ENCODE measurements at regions of chr5 and their contacts with region 1.

Region 1: DNA sequence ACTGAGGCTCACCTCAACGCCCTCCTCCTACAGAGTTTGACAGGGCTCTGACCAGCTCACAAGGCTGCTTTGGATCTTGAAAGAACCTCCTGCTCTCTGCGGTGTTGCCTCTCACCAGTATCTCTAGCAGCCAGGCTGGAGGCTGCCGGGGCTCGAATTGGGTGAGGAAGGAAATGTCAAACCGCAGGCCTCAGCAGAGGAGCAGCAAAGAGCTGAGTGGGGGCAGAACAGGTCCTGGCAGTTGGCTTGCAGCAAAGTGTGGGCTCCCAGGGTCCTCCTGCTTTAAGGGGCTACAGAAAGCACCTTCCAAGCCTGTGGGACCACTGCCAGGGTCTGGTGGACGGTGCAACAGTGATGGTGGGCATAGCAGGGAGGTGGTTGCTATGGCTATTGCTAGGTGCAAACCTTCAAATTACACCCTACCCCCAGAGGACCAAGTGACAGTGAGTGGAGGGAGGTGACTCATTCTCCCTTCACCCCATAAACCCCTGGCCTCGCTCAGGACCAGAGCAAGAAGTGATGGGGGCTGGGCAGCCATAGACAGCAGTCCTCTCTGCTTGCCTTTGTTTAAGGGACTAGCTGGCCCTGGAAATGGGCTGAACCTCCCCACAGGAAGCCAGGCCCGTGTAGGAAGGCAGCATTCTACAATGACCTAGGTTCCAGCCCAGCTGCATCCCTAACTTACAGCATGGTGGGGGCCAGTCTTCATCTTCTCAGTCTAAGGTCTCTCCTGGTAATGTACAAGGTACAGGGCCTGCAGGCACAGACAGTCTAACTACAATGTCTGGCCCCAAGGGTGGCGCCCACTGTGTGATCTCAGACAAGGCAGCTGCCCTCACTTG is 18.7 kb downstream of the LCP2 start:
- DNase-seq: peak; percentile 73
- ATAC-seq: peak; percentile 87
- H3K4me3 ChIP-seq: peak overlapping the region in 2 of 5 experiments; percentile 5 to 35
- H3K4me3 Mint-ChIP-seq: peak overlapping the region; percentile 61
- H3K27ac ChIP-seq: peak overlapping the region; percentile 15 to 49
- H3K27ac Mint-ChIP-seq: peak overlapping the region; percentile 90
- H3K4me1 ChIP-seq: peaks cover 41 to 46% of the 10 kb centered on the region in 2 donors
- H3K4me1 Mint-ChIP-seq: peaks cover 46% of the 10 kb centered on the region
- H3K27me3 ChIP-seq: no peaks in the 10 kb centered on the region
- H3K27me3 Mint-ChIP-seq: no peaks in the 10 kb centered on the region
- CTCF ChIP-seq: no peak

Region 2: DNA sequence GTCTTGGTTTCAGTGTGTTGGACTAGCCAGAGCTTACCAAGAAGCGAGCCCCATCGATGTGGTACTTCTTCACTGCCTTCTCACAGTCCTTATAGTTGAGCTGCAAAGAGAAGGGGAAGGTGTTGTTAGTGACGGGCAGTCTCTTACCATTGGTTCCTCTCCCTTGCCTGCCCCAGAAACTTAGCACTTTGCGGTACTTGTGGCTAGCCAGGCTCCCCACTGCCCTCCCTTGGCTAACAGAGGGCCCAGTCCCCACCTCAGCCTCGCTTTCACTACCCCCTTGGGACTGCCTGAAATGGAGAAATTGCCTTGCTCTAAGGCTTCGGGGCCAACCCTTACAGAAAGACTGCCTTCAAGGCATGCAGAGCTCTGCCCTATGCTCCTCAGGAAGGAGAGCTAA is 14.4 kb after region 1 on chr5:
- CTCF ChIA-PET with region 1: interaction called, 99 read pairs
- POLR2A ChIA-PET with region 1: interaction called, 10 read pairs
- intact Hi-C with region 1: loop called (anchors 1 kb)
- DNase-seq: peak; percentile 91
- ATAC-seq: peak; percentile 92
- H3K4me3 ChIP-seq: peak overlapping the region in 2 of 5 experiments; percentile 19 to 34
- H3K4me3 Mint-ChIP-seq: peak overlapping the region; percentile 30
- H3K27ac ChIP-seq: no peak overlapping the region
- H3K27ac Mint-ChIP-seq: peak overlapping the region; percentile 60
- H3K4me1 ChIP-seq: peaks cover 59 to 70% of the 10 kb centered on the region in 2 donors
- H3K4me1 Mint-ChIP-seq: peaks cover 63% of the 10 kb centered on the region
- H3K27me3 ChIP-seq: peaks cover 0 to 45% (median 19%) of the 10 kb centered on the region in 4 experiments
- H3K27me3 Mint-ChIP-seq: peaks cover 36% of the 10 kb centered on the region
- CTCF ChIP-seq: no peak

Region 3: DNA sequence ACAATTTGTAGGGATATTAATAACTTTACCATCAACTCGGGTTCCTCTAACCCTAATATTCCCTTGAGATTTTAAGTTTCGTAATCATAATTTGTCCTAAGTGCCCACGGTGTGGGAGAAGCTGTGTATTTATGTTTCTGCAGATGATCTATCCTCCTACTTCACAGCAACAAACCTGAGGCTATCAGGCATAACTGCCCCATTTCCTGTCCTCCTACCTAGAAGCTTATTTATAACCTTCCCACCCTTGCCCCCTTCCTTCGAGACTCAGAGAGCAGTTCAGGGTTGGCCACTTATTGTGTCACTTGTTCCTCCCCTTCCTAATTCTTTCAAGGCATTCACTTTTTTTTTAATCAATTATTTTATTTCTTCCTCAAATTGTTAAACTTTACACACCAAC is 48.3 kb after region 1 on chr5:
- CTCF ChIA-PET with region 1: interaction called, 34 read pairs
- POLR2A ChIA-PET with region 1: interaction called, 6 read pairs
- intact Hi-C with region 1: loop called (anchors 1 kb)
- DNase-seq: peak; percentile 28
- ATAC-seq: no peak
- H3K4me3 ChIP-seq: peak overlapping the region in 3 of 5 experiments; percentile 13 to 28 (median 26)
- H3K4me3 Mint-ChIP-seq: no peak overlapping the region
- H3K27ac ChIP-seq: peak overlapping the region; percentile 31 to 66
- H3K27ac Mint-ChIP-seq: no peak overlapping the region
- H3K4me1 ChIP-seq: peaks cover 61 to 68% of the 10 kb centered on the region in 2 donors
- H3K4me1 Mint-ChIP-seq: peaks cover 18% of the 10 kb centered on the region
- H3K27me3 ChIP-seq: no peaks in the 10 kb centered on the region
- H3K27me3 Mint-ChIP-seq: no peaks in the 10 kb centered on the region
- CTCF ChIP-seq: no peak

Region 4: GRCh38 chr5:170333161-170333910 is 54.5 kb after region 1 on chr5:
- CTCF ChIA-PET with region 1: interaction called, 127 read pairs
- POLR2A ChIA-PET with region 1: interaction called, 6 read pairs
- intact Hi-C with region 1: loop called (anchors 1 kb)
- DNase-seq: peak; percentile 30
- ATAC-seq: peak; percentile 10
- H3K4me3 ChIP-seq: no peak overlapping the region
- H3K4me3 Mint-ChIP-seq: peak overlapping the region; percentile 23
- H3K27ac ChIP-seq: peak overlapping the region in 1 of 2 donors; percentile 78
- H3K27ac Mint-ChIP-seq: no peak overlapping the region
- H3K4me1 ChIP-seq: peaks cover 53 to 59% of the 10 kb centered on the region in 2 donors
- H3K4me1 Mint-ChIP-seq: peaks cover 35% of the 10 kb centered on the region
- H3K27me3 ChIP-seq: no peaks in the 10 kb centered on the region
- H3K27me3 Mint-ChIP-seq: no peaks in the 10 kb centered on the region
- CTCF ChIP-seq: no peak

Region 5: DNA sequence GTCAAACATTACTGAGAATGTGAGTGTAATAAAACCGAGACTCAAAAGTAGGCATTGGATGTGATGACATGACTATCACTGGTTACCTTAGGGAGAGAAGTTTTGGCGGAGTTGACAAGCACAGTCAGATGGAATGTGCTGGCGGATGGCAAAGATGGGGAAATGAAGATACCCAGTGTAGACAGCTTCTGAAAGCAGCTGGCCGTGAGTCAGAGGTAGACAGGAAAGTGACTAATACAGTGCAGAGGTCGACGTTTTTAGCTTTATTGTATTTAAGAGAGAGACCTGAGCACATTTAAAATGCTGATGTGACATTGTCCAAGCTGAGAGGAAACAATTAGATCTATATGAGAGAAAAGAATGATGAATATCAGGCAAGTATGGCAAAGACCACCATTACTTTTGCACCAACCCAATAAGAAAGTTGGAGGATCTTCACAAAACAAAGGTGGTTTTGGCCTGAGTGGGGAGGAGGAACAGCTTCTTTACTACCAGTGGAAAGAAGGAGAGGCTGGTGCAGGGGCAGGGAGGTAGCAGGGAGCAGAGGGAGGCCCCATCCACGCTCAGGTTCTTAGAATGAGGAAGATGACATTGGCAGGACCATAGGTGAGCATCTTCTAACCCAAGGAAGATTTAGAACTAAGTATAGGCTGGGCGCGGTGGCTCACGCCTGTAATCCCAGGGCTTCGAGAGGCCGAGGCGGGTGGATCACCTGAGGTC is 188.3 kb after region 1 on chr5:
- CTCF ChIA-PET with region 1: no interaction called
- POLR2A ChIA-PET with region 1: no interaction called
- intact Hi-C with region 1: no loop called
- DNase-seq: no peak
- ATAC-seq: no peak
- H3K4me3 ChIP-seq: no peak overlapping the region
- H3K4me3 Mint-ChIP-seq: no peak overlapping the region
- H3K27ac ChIP-seq: no peak overlapping the region
- H3K27ac Mint-ChIP-seq: no peak overlapping the region
- H3K4me1 ChIP-seq: no peaks in the 10 kb centered on the region
- H3K4me1 Mint-ChIP-seq: no peaks in the 10 kb centered on the region
- H3K27me3 ChIP-seq: no peaks in the 10 kb centered on the region
- H3K27me3 Mint-ChIP-seq: peaks cover 7% of the 10 kb centered on the region
- CTCF ChIP-seq: no peak

Measured in B cell (primary cell).